Calu3 (cell line): ENCODE measurements at regions of chr19 and their contacts with region 1.

Region 1: DNA sequence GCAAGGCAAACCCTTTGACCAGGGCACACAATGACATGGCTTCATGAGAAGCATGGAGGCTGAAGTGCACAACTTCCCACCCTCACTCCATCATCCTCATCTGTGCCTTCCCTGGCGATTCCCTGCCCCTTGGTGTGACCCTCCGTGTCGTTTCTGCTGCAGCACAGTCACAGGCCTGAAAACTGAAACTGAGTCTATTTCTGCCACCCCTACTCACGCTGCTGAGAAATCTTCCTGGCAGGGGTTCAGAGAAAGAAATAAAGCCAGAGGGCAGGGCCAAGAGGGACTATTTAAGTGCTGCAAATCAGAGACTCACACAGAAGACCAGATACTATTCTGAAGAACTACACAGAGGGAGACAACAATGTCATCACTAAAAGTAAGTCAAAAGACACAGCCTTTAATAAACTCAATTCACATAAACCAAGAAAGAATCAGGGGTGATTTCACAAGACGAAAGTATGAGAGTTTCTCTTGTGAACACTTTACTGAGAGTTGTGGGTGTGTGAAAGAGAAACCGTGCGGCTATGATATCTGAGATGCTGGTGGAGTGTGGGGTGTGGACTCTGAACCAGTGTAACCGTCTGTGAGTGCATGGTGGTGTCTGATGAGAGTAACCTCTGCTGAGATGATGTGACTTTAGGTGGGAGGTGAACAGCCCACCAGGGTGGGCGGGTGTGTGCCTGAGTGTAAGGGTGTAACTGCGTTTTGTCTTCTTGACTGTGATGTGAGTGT is 23.5 kb downstream of the LGALS16 start:
- DNase-seq: no peak
- H3K4me3 Mint-ChIP-seq: no peak overlapping the region
- H3K27ac Mint-ChIP-seq: no peak overlapping the region
- H3K4me1 Mint-ChIP-seq: peaks cover 22% of the 10 kb centered on the region
- H3K27me3 Mint-ChIP-seq: peaks cover 49% of the 10 kb centered on the region
- CTCF ChIP-seq: no peak

Region 2: GRCh38 chr19:39696418-39696817 is 17.2 kb after region 1 on chr19:
- CTCF ChIA-PET with region 1: no interaction called
- intact Hi-C with region 1: no loop called
- DNase-seq: no peak
- H3K4me3 Mint-ChIP-seq: no peak overlapping the region
- H3K27ac Mint-ChIP-seq: no peak overlapping the region
- H3K4me1 Mint-ChIP-seq: no peaks in the 10 kb centered on the region
- H3K27me3 Mint-ChIP-seq: peaks cover 99% of the 10 kb centered on the region
- CTCF ChIP-seq: no peak

Region 3: GRCh38 chr19:39725995-39726394 is 46.8 kb after region 1 on chr19:
- CTCF ChIA-PET with region 1: no interaction called
- intact Hi-C with region 1: loop called (anchors 1 kb)
- DNase-seq: no peak
- H3K4me3 Mint-ChIP-seq: no peak overlapping the region
- H3K27ac Mint-ChIP-seq: no peak overlapping the region
- H3K4me1 Mint-ChIP-seq: no peaks in the 10 kb centered on the region
- H3K27me3 Mint-ChIP-seq: peaks cover 100% of the 10 kb centered on the region
- CTCF ChIP-seq: no peak

Region 4: DNA sequence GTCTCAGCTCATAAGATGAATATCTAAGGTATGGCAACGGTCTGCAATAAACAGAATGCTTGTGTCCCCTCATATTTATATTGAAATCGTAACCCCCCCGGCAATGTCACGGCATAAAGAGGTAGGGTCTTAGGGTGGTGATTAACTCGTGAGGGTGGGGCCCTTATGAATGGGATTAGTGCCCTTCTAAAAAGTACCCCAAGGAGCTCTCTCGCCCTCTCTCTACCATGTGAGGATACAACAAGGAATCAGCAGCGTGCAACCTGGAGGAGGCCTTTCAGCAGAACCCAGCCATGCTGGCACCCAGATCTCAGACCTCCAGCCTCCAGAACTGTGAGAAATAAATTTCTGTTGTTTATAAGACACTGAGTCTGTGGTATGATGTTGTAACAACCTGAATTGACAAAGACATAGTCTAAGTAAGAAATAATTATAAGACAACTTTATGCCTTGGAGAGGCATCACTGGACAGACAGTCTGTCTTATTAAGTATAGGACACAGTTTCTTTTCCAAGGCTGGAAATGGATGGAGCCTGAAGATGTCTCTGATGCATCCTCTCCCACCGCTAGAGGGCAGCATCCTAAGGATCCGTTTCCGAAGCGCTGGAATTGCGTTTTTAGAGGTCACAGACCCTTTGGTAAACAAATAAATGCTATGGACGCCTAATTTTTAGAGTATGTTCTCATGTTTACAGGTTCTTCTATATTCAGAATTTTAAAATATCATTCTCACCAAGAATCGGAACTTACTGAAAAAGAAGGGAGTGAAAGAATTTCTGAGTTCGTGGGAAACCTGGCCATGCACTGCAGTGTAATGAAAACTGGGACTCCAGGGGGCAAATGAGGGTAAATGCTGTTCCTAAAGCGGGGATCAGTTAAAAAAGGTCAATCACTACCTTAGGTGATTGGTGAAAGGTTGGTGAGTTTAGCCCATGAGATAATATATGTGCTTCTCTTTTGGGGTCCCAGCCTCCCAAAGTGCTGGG is 86.2 kb after region 1 on chr19:
- CTCF ChIA-PET with region 1: interaction called, 3 read pairs
- intact Hi-C with region 1: loop called (anchors 5 kb)
- DNase-seq: peak; percentile 71
- H3K4me3 Mint-ChIP-seq: no peak overlapping the region
- H3K27ac Mint-ChIP-seq: no peak overlapping the region
- H3K4me1 Mint-ChIP-seq: no peaks in the 10 kb centered on the region
- H3K27me3 Mint-ChIP-seq: peaks cover 65% of the 10 kb centered on the region
- CTCF ChIP-seq: peak; percentile 70